AG04450 (cell line): ENCODE measurements at regions of chr9 and their contacts with region 1.

Region 1: DNA sequence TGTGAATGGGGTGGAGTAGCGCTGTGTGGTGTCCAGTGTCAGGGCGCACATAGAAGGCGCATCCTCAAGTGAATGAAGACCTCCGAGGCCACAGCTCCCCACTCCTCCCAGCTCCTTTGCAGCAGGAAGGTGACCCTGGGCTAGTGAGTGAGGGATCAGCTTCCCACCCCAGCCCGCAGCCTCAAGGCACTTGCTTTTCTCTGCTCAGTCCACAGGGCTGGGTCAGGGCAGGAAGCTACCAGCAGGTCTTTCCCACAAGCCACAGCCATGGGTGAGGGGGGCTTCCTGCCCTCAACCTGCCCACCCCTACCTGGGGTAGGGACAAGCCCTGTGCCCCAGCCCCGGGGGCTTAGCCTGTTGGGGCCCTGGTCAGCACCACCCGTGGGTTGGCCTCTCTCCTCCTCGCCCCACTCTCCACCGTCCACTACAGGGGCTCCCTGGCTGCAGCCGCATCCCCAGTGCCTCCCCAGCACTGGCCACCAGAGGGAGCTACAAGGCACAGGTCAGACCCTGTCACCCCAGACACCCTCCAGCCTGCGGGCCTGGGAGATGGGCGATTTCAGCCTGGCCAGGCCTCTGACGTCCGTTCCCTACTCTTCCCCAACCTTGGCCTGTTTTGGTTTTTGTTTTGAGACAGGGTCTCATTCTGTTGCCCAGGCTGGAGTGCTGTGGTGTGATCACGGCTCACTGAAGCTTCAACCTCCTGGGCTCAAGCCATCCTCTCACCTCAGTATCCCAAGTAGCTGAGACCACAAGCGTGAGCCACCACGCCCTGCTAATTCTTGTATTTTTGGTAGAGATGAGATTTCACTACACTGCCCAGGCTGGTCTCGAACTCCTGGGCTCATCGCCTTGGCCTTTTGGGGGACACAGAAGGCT is 1.3 kb upstream of the ABCA2 start:
- DNase-seq: no peak
- H3K4me3 ChIP-seq: no peak overlapping the region; the same call in 1 of the 2 replicates
- H3K27ac ChIP-seq: no peak overlapping the region
- H3K27me3 ChIP-seq: no peaks in the 10 kb centered on the region
- CTCF ChIP-seq: peak; percentile 88

Region 2: DNA sequence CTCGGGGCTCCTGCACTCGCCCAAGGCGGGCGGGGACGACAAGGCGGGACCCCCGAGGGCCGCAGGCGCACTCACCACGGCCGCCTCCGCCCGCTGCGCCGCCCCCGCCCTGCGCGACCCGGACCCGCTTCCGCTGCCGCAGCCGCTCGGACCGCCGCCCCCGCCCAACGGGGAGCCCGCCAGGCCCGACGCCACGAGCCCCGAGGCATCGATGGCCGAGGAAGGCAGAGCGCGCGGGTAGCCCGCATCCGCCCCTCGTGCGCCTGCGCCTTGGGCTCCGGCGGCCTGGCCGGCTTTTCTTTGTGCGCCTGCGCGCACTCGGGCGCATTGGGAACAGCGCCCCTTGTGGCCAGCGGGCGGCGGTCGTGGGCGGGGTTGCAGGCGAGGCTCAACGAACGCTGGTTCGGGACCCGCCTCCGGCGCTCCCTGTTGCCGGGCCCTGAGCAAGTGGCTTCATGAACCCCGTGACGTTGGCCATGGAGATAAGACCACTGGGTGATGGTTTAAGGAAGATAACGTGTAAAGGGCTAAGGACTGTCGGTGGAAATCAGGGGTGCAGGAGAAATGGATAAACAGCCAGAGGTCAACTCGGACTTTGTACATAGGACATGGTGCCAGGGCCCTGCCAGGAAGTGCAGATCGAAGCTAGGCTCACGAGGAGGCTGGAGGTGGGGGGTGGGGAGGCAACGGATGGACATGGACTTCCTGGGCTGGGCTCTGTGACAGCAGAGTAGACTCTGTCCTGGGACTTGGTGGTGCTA is 84.6 kb before region 1 on chr9 and contains the starts of genes C8G and FBXW5:
- CTCF ChIA-PET with region 1: interaction called, 105 read pairs
- POLR2A ChIA-PET with region 1: interaction called, 10 read pairs
- DNase-seq: peak; percentile 74
- H3K4me3 ChIP-seq: peak within 1 kb of the TSS; percentile 78
- H3K27ac ChIP-seq: peak within 1 kb of the TSS; percentile 61
- H3K27me3 ChIP-seq: no peaks in the 10 kb centered on the region
- CTCF ChIP-seq: peak; percentile 86
- polyA plus RNA-seq, gene C8G: 0.41 TPM in 1 of 2 replicates, not detected in the other
- polyA plus RNA-seq, gene FBXW5: 31.2 and 46.4 TPM in 2 replicates

Region 3: GRCh38 chr9:136991993-136992818 is 37.1 kb before region 1 on chr9 and contains the start of gene PAXX:
- CTCF ChIA-PET with region 1: interaction called, 11 read pairs
- POLR2A ChIA-PET with region 1: no interaction called
- DNase-seq: peak; percentile 57
- H3K4me3 ChIP-seq: peak within 1 kb of the TSS; percentile 74
- H3K27ac ChIP-seq: no peak within 1 kb of the TSS
- H3K27me3 ChIP-seq: peaks cover 6% of the 10 kb centered on the region
- CTCF ChIP-seq: no peak
- polyA plus RNA-seq, gene PAXX: 6.0 and 6.7 TPM in 2 replicates

Region 4: DNA sequence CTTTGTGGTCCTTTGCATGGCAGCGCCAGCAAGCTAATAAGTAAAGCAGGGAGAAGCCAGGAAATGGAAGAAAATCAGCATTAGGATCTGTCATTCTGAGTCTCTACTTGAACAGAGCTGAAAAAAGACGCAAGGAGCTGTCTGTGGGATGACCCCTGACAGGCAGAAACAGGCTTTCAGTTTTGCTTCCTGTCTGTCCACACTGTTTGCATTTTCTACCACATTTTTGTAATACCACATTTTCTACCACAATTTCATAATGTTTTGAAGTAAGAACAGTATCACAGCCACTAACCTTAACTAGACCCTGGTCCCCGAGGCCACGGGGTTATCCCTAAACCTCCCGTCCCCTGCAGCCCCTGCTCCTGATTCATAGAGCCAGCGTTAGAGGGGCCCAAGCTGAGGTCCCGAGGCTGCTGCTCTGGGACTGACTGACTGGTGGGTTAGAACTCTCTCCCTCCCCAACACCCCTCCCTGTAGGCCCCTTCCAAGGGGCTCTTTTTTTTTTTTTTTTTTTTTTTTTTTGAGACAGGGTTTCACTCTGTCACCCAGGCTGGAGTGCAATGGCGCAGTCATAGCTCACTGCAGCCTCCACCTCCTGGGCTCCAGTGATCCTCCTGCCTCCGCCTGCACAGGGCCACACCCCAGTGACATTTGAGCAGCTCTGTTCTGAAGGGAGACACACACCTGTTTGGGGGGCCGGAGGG is 29.0 kb before region 1 on chr9:
- CTCF ChIA-PET with region 1: interaction called, 13 read pairs
- POLR2A ChIA-PET with region 1: no interaction called
- DNase-seq: peak; percentile 47
- H3K4me3 ChIP-seq: no peak overlapping the region
- H3K27ac ChIP-seq: no peak overlapping the region
- H3K27me3 ChIP-seq: peaks cover 5% of the 10 kb centered on the region
- CTCF ChIP-seq: no peak

Region 5: GRCh38 chr9:137046098-137046787 is 16.9 kb after region 1 on chr9 and contains the start of gene NPDC1:
- CTCF ChIA-PET with region 1: interaction called, 16 read pairs
- POLR2A ChIA-PET with region 1: no interaction called
- DNase-seq: no peak
- H3K4me3 ChIP-seq: peak within 1 kb of the TSS; percentile 68
- H3K27ac ChIP-seq: no peak within 1 kb of the TSS
- H3K27me3 ChIP-seq: peaks cover 29% of the 10 kb centered on the region
- CTCF ChIP-seq: peak; percentile 87
- polyA plus RNA-seq, gene NPDC1: 8.9 and 16.5 TPM in 2 replicates

Region 6: GRCh38 chr9:137138722-137139467 is 109.6 kb after region 1 on chr9 and contains the start of gene GRIN1:
- CTCF ChIA-PET with region 1: no interaction called
- POLR2A ChIA-PET with region 1: no interaction called
- DNase-seq: no peak
- H3K4me3 ChIP-seq: no peak within 1 kb of the TSS
- H3K27ac ChIP-seq: no peak within 1 kb of the TSS
- H3K27me3 ChIP-seq: peaks cover 52% of the 10 kb centered on the region
- CTCF ChIP-seq: no peak
- polyA plus RNA-seq, gene GRIN1: 0.04 TPM in 1 of 2 replicates, not detected in the other